ENCODE measurements at regions of chr10 and their contacts with region 1.

Region 1: DNA sequence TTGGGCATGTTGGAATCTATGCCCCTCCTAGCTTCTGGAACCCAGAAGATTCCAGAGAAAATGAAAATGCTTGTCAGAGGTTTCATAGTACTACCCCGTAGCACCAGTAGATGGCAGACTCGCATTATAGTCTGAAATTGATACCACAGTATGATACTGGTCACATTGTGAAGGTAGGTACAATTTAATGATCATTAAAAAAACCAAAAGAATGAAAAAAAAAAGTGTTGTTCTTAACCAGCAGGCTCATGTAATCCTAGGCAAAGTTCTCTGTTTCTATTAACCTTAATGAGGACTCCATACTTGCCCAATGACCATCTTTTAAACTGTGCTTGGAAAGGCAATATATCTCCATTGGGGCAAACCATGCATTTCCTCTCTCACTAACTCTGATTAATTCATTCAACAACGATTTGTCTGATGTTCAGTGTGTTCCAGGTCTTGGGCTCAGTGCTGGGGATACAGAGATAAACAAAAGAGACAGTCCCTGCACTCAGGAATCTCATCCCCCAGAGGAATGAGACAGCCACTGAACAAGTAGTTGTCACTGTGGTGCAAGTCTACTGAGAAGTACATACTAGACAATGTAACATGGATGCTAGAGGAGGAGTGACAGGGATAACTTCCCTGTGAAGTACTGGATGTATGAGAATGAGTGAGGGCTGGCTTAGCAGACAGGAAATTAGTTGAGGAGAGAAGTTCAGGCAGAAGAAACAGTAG is 223.5 kb upstream of the PHYHIPL start:
- DNase-seq: peak; percentile 25
- ATAC-seq: peak; percentile 80
- H3K4me3 ChIP-seq: no peak overlapping the region
- H3K27ac ChIP-seq: no peak overlapping the region
- H3K4me1 ChIP-seq: no peaks in the 10 kb centered on the region
- H3K27me3 ChIP-seq: no peaks in the 10 kb centered on the region
- CTCF ChIP-seq: peak; percentile 82

Region 2: DNA sequence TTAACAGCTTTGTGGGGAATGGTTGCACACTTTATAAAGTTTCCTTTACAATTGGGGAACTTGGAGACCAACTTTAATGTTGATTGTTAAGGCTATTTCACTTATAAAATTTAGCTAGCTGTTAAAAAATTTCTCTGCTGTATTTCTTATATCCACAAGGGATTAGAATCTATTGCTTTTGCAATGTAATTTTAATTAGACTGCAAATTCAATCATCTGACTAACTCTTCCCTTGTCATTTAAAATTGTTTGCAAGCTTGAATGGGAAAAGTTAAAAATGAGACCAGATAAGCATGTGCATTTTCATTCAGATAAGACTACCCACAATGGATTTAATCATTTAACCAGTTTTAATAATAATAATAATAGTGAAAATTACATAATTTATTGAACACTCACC is 227.0 kb before region 1 on chr10:
- CTCF ChIA-PET with region 1: interaction called, 17 read pairs
- POLR2A ChIA-PET with region 1: no interaction called
- in situ Hi-C with region 1: no loop called
- intact Hi-C with region 1: no loop called
- DNase-seq: no peak
- ATAC-seq: no peak
- H3K4me3 ChIP-seq: no peak overlapping the region
- H3K27ac ChIP-seq: no peak overlapping the region
- H3K4me1 ChIP-seq: no peaks in the 10 kb centered on the region
- H3K27me3 ChIP-seq: no peaks in the 10 kb centered on the region
- CTCF ChIP-seq: no peak

Region 3: DNA sequence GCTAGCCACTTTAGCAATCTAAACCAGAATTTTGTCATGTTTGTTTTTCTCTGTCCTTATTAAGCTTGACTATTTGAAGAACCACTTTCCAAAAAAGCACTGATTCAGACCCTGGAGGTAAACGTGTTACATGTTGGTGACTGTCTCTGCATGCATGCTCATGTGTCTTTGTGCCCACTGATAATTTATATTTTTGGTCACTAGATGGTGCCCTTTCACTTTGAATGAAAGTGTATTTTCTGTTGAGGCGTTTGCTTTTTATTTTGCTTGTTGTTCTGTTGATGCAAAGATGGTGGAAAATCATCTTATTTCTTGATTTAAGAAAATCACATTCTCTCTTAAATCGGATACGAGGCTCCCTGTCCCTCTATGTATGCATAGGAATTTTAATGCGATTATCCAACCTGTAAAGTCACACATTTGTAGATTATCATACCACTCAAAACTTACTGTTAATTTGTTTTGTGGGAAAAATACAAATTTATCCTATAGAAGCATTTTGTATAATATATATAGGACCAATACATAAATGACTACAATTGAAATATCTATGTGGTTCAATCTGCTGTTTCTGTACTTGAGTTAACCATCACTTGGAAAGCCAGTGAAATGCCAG is 170.9 kb before region 1 on chr10:
- CTCF ChIA-PET with region 1: interaction called, 4 read pairs
- POLR2A ChIA-PET with region 1: no interaction called
- in situ Hi-C with region 1: no loop called
- intact Hi-C with region 1: loop called (anchors 5 kb)
- DNase-seq: peak; percentile 52
- ATAC-seq: peak; percentile 70; the same call in 1 of the 2 replicates
- H3K4me3 ChIP-seq: no peak overlapping the region
- H3K27ac ChIP-seq: no peak overlapping the region
- H3K4me1 ChIP-seq: no peaks in the 10 kb centered on the region
- H3K27me3 ChIP-seq: no peaks in the 10 kb centered on the region
- CTCF ChIP-seq: peak; percentile 69; the same call in 1 of the 2 replicates

Region 4: GRCh38 chr10:59124187-59124586 is 171.3 kb after region 1 on chr10:
- CTCF ChIA-PET with region 1: no interaction called
- POLR2A ChIA-PET with region 1: no interaction called
- in situ Hi-C with region 1: no loop called
- intact Hi-C with region 1: no loop called
- DNase-seq: no peak
- ATAC-seq: no peak
- H3K4me3 ChIP-seq: no peak overlapping the region
- H3K27ac ChIP-seq: no peak overlapping the region
- H3K4me1 ChIP-seq: no peaks in the 10 kb centered on the region
- H3K27me3 ChIP-seq: no peaks in the 10 kb centered on the region
- CTCF ChIP-seq: no peak

Region 5: GRCh38 chr10:59181668-59182067 is 228.8 kb after region 1 on chr10:
- CTCF ChIA-PET with region 1: no interaction called
- POLR2A ChIA-PET with region 1: no interaction called
- in situ Hi-C with region 1: no loop called
- intact Hi-C with region 1: loop called (anchors 5 kb)
- DNase-seq: peak; percentile 30
- ATAC-seq: peak; percentile 89
- H3K4me3 ChIP-seq: no peak overlapping the region
- H3K27ac ChIP-seq: no peak overlapping the region
- H3K4me1 ChIP-seq: no peaks in the 10 kb centered on the region
- H3K27me3 ChIP-seq: no peaks in the 10 kb centered on the region
- CTCF ChIP-seq: peak; percentile 52; the same call in 1 of the 2 replicates

Region 6: DNA sequence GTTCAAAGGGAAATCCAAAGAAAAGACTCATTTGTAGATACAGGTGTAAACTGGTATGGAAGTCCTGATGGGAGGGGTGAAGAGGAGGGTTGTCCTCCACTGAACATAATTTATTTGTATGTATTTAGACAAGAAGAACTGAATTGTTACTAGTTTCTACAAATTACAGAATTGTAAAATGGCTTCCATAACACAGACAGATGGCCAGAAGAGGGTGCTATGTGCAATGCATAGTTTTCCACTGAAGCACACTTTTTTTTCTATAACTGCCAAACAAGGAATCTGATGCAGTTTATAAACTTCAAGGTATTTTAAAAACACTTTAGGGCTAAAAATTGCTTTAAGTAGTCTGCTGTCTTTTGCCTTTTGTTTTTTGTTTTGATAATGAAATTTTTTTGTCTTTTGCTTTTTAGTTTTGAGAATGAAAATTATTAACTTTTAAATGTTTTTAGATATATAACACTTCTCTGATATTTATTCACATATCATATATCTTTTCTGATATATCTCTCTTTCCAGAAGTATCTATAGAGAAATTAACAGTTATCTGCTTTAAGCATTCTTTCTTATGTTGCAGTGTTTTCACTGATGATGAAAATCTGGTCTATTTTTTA is 282.0 kb after region 1 on chr10:
- CTCF ChIA-PET with region 1: no interaction called
- POLR2A ChIA-PET with region 1: no interaction called
- in situ Hi-C with region 1: no loop called
- intact Hi-C with region 1: loop called (anchors 5 kb)
- DNase-seq: peak; percentile 12
- ATAC-seq: no peak
- H3K4me3 ChIP-seq: no peak overlapping the region
- H3K27ac ChIP-seq: no peak overlapping the region
- H3K4me1 ChIP-seq: no peaks in the 10 kb centered on the region
- H3K27me3 ChIP-seq: no peaks in the 10 kb centered on the region
- CTCF ChIP-seq: peak; percentile 68; the same call in 1 of the 2 replicates